Esophagus squamous epithelium (tissue), 5 donors: ENCODE measurements at regions of chr5 and their contacts with region 1.

Region 1: GRCh38 chr5:131589510-131590348 is 45.3 kb downstream of the RAPGEF6 start:
- DNase-seq: no peak
- H3K4me3 ChIP-seq: no peak overlapping the region
- H3K27ac ChIP-seq: no peak overlapping the region
- H3K4me1 ChIP-seq: peaks cover 0 to 14% (median 5%) of the 10 kb centered on the region in 3 donors
- H3K27me3 ChIP-seq: no peaks in the 10 kb centered on the region
- CTCF ChIP-seq: peak; percentile 59 to 81 (median 76)
- POLR2A ChIP-seq: no peak

Region 2: GRCh38 chr5:132007399-132008165 is 417.9 kb after region 1 on chr5:
- intact Hi-C with region 1: loop called (anchors 5 kb)
- DNase-seq: peak; percentile 8
- H3K4me3 ChIP-seq: no peak overlapping the region
- H3K27ac ChIP-seq: no peak overlapping the region
- H3K4me1 ChIP-seq: peaks cover 13 to 39% (median 14%) of the 10 kb centered on the region in 3 donors
- H3K27me3 ChIP-seq: peaks cover 0 to 20% (median 0%) of the 10 kb centered on the region in 4 donors
- CTCF ChIP-seq: peak; percentile 49 to 83 (median 72)
- POLR2A ChIP-seq: no peak

Region 3: GRCh38 chr5:132147663-132148062 is 557.9 kb after region 1 on chr5:
- intact Hi-C with region 1: no loop called
- DNase-seq: no peak
- H3K4me3 ChIP-seq: no peak overlapping the region
- H3K27ac ChIP-seq: no peak overlapping the region
- H3K4me1 ChIP-seq: no peaks in the 10 kb centered on the region
- H3K27me3 ChIP-seq: no peaks in the 10 kb centered on the region
- CTCF ChIP-seq: no peak
- POLR2A ChIP-seq: no peak